Prostate gland (tissue), 2 donors: ENCODE measurements at regions of chr3 and their contacts with region 1.

Region 1: GRCh38 chr3:116770815-116771450 is 61.4 kb downstream of the TUSC7 start:
- DNase-seq: peak; percentile 54
- H3K4me3 ChIP-seq: no peak overlapping the region
- H3K27ac ChIP-seq: no peak overlapping the region
- H3K4me1 ChIP-seq: no peaks in the 10 kb centered on the region
- H3K27me3 ChIP-seq: no peaks in the 10 kb centered on the region
- CTCF ChIP-seq: peak in 3 of 4 experiments; percentile 63 to 79 (median 74)
- POLR2A ChIP-seq: no peak

Region 2: GRCh38 chr3:117019082-117019713 is 248.3 kb after region 1 on chr3:
- intact Hi-C with region 1: loop called (anchors 10 kb)
- DNase-seq: peak; percentile 52
- H3K4me3 ChIP-seq: no peak overlapping the region
- H3K27ac ChIP-seq: no peak overlapping the region
- H3K4me1 ChIP-seq: no peaks in the 10 kb centered on the region
- H3K27me3 ChIP-seq: no peaks in the 10 kb centered on the region
- CTCF ChIP-seq: peak; percentile 26 to 77 (median 70)
- POLR2A ChIP-seq: no peak

Region 3: GRCh38 chr3:117526470-117527079 is 755.6 kb after region 1 on chr3:
- intact Hi-C with region 1: loop called (anchors 5 kb)
- DNase-seq: peak; percentile 5
- H3K4me3 ChIP-seq: no peak overlapping the region
- H3K27ac ChIP-seq: no peak overlapping the region
- H3K4me1 ChIP-seq: no peaks in the 10 kb centered on the region
- H3K27me3 ChIP-seq: no peaks in the 10 kb centered on the region
- CTCF ChIP-seq: peak; percentile 16 to 66 (median 55)
- POLR2A ChIP-seq: no peak

Region 4: GRCh38 chr3:117722856-117723255 is 951.9 kb after region 1 on chr3:
- intact Hi-C with region 1: loop called (anchors 5 kb)
- DNase-seq: no peak
- H3K4me3 ChIP-seq: no peak overlapping the region
- H3K27ac ChIP-seq: no peak overlapping the region
- H3K4me1 ChIP-seq: no peaks in the 10 kb centered on the region
- H3K27me3 ChIP-seq: no peaks in the 10 kb centered on the region
- CTCF ChIP-seq: no peak
- POLR2A ChIP-seq: no peak

Region 5: GRCh38 chr3:117997201-117998049 is 1226.5 kb after region 1 on chr3:
- intact Hi-C with region 1: loop called (anchors 10 kb)
- DNase-seq: peak; percentile 65
- H3K4me3 ChIP-seq: peak overlapping the region; percentile 37 to 47
- H3K27ac ChIP-seq: peak overlapping the region in 1 of 2 donors; percentile 26
- H3K4me1 ChIP-seq: no peaks in the 10 kb centered on the region
- H3K27me3 ChIP-seq: no peaks in the 10 kb centered on the region
- CTCF ChIP-seq: peak; percentile 43 to 72 (median 62)
- POLR2A ChIP-seq: no peak